PC-3 (cell line): ENCODE measurements at regions of chr18 and their contacts with region 1.

Region 1: DNA sequence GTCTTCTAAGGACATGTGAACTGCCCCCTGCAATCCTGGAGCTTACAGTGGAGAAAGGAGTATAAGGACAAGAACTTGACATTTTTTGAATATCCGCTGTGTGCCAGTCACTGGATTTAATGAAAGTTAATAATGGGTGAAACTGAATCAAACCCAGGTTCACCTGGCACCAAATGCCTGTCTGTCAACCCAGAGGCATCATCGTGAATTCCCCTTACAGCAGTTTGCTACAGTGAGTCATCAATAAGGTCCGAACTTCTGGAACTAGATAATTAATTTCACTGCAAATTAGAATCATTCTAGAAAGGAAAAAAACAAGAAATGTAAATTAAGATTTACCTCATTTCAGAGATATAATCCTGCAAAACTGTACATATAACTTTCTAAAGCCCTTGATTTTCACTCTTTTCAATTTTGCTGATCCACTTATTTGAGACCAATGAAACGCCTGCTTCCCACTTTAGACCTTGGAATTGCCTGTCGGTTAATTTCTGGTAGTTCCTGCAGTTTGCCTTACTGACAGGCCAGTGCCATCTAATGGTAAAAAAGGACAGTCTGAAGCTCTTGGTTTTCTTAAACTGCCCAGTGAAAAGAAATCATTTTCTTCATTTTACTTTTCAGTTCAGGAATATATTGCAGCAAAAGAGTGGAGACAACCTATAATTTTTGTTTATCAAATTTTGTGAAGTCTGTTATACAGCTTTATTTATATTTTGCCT is 8.2 kb downstream of the DSG2 start:
- DNase-seq: peak; percentile 24
- ATAC-seq: peak; percentile 53
- H3K4me3 ChIP-seq: no peak overlapping the region
- H3K27ac ChIP-seq: no peak overlapping the region
- H3K4me1 ChIP-seq: peaks cover 18% of the 10 kb centered on the region
- H3K27me3 ChIP-seq: no peaks in the 10 kb centered on the region
- CTCF ChIP-seq: peak; percentile 53

Region 2: DNA sequence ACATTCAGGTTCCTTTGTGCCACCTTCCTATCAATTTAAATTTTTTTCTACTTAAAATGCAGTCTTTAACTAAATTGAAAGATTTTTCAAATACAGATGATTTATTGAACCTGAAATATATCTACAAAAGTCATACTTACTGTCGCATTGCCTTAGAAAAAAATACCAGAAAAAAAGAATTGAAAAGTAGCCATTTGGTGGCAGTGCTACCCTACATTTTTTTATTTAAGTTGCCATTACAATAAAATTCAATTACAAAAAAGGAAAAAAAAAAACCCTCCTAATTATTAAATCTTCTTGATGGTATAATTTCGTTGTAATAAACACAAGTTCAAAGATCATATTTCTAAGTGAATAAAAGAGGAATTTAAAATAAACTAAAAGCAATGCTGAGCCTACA is 507.0 kb before region 1 on chr18:
- CTCF ChIA-PET with region 1: no interaction called
- POLR2A ChIA-PET with region 1: no interaction called
- intact Hi-C with region 1: loop called (anchors 1 kb)
- DNase-seq: peak; percentile 36
- ATAC-seq: no peak
- H3K4me3 ChIP-seq: no peak overlapping the region
- H3K27ac ChIP-seq: no peak overlapping the region
- H3K4me1 ChIP-seq: no peaks in the 10 kb centered on the region
- H3K27me3 ChIP-seq: no peaks in the 10 kb centered on the region
- CTCF ChIP-seq: peak; percentile 55

Region 3: DNA sequence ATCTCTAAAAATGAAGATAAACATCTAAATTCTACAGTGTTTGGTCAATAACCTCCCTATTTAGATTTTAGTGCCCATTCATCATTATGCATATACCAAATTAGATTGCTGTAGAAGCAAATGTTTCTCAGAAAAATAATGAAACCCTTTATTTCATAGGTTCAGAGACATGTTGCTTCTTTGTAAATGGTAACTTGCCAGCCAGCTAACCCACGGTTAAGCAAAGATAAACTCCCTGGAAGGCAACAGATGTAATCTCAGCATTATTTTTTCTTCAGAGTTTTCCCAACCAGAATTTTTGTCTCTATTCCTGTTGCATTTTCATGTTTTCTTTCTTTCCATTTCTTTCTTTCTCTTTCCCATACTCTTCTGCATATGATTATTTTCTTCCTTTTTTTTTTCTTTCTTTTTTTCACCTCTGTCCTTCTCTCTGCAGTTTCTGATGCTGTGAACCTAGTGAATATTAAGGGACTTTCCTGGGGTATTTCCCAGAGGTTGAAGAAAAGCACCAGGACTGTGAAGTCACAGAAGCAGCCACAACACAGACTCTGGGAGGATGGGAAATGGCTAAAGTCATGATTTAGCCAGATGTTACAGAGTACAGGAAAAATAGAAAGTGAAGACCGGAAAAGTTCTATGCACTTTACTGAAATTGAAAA is 238.2 kb before region 1 on chr18:
- CTCF ChIA-PET with region 1: no interaction called
- POLR2A ChIA-PET with region 1: no interaction called
- intact Hi-C with region 1: loop called (anchors 2 kb)
- DNase-seq: no peak
- ATAC-seq: no peak
- H3K4me3 ChIP-seq: no peak overlapping the region
- H3K27ac ChIP-seq: no peak overlapping the region
- H3K4me1 ChIP-seq: peaks cover 4% of the 10 kb centered on the region; the same call in 1 of the 2 replicates
- H3K27me3 ChIP-seq: no peaks in the 10 kb centered on the region
- CTCF ChIP-seq: no peak

Region 4: GRCh38 chr18:31658670-31659575 is 152.7 kb after region 1 on chr18:
- CTCF ChIA-PET with region 1: no interaction called
- POLR2A ChIA-PET with region 1: no interaction called
- intact Hi-C with region 1: no loop called
- DNase-seq: peak; percentile 23
- ATAC-seq: peak; percentile 16; the same call in 1 of the 2 replicates
- H3K4me3 ChIP-seq: no peak overlapping the region
- H3K27ac ChIP-seq: no peak overlapping the region
- H3K4me1 ChIP-seq: peaks cover 5% of the 10 kb centered on the region; the same call in 1 of the 2 replicates
- H3K27me3 ChIP-seq: no peaks in the 10 kb centered on the region
- CTCF ChIP-seq: no peak